Kidney (tissue), 22 donors: ENCODE measurements at regions of chr4 and their contacts with region 1.

Region 1: GRCh38 chr4:112099701-112100297 is 45.5 kb upstream of the FAM241A start:
- DNase-seq: peak in 2 of 5 donors; percentile 64 to 69
- H3K4me3 ChIP-seq: no peak overlapping the region
- H3K27ac ChIP-seq: no peak overlapping the region
- H3K4me1 ChIP-seq: no peaks in the 10 kb centered on the region
- H3K27me3 ChIP-seq: no peaks in the 10 kb centered on the region
- CTCF ChIP-seq: peak; percentile 49

Region 2: GRCh38 chr4:112234952-112235609 is 135.3 kb after region 1 on chr4:
- intact Hi-C with region 1: loop called (anchors 5 kb)
- DNase-seq: peak in 3 of 5 donors; percentile 46 to 89 (median 80)
- H3K4me3 ChIP-seq: no peak overlapping the region
- H3K27ac ChIP-seq: no peak overlapping the region
- H3K4me1 ChIP-seq: no peaks in the 10 kb centered on the region
- H3K27me3 ChIP-seq: no peaks in the 10 kb centered on the region
- CTCF ChIP-seq: peak; percentile 73

Region 3: DNA sequence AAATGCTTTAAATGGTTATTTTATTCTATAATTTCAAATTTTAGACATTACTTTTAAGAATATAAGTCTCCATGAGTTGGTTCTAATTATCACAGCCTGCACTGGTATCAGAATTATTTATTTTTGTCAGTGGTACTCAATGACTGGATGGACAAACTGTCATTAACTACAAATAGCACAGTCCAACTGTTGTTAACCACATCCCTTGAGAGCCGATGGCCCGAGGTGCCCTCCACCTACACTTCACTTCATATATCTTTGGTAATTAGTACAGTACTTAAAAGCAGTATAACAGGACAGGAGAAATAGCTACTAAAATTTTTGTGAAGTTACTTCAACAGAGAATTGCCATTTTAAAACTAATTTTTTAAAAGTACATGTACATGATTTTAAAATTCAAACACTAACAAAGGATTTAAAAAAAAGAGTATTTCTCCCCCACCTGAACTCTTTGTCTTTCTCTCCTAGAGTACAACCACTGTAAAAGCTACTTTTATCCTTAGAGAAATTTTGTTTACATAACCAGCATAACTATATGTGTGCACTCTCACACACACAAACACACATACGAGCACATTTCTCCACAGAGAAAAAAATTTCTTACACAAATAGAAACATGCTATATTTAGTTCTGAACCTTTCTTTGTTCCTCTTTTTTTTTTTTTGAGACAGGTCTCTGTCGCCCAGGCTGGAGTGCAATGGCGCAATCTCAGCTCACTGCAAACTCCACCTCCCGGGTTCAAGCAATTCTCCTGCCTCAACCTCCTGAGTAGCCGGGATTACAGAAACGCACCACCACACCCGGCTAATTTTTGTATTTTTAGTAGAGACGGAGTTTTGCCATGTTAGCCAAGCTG is 179.5 kb after region 1 on chr4:
- intact Hi-C with region 1: no loop called
- DNase-seq: no peak
- H3K4me3 ChIP-seq: no peak overlapping the region
- H3K27ac ChIP-seq: no peak overlapping the region
- H3K4me1 ChIP-seq: peaks cover 0 to 2% (median 0%) of the 10 kb centered on the region in 3 donors
- H3K27me3 ChIP-seq: no peaks in the 10 kb centered on the region
- CTCF ChIP-seq: no peak